ENCODE measurements at regions of chr16 and their contacts with region 1.

Region 1: GRCh38 chr16:67846320-67847063 is at the start of gene NUTF2:
- DNase-seq: peak; percentile 97 to 98 (median 98)
- ATAC-seq: peak; percentile 83 to 91 (median 88)
- H3K4me3 ChIP-seq: peak within 1 kb of the TSS; percentile 76 to 100 (median 94)
- H3K27ac ChIP-seq: peak within 1 kb of the TSS; percentile 88 to 100 (median 96)
- H3K4me1 ChIP-seq: peaks cover 24 to 65% (median 51%) of the 10 kb centered on the region in 12 donors
- H3K27me3 ChIP-seq: no peaks in the 10 kb centered on the region
- CTCF ChIP-seq: peak in 1 of 12 donors; percentile 9
- POLR2A ChIP-seq: peak in 1 of 2 donors; percentile 70
- total RNA-seq, gene NUTF2: 66.5 to 145 (median 90.9) TPM

Region 2: GRCh38 chr16:66977341-66978113 is 869.0 kb before region 1 on chr16:
- intact Hi-C with region 1: no loop called
- DNase-seq: peak; percentile 86 to 93 (median 88)
- ATAC-seq: peak; percentile 91 to 97 (median 96)
- H3K4me3 ChIP-seq: no peak overlapping the region
- H3K27ac ChIP-seq: no peak overlapping the region
- H3K4me1 ChIP-seq: peaks cover 0 to 9% (median 0%) of the 10 kb centered on the region in 12 donors
- H3K27me3 ChIP-seq: no peaks in the 10 kb centered on the region
- CTCF ChIP-seq: peak; percentile 92 to 98 (median 95)
- POLR2A ChIP-seq: no peak

Region 3: DNA sequence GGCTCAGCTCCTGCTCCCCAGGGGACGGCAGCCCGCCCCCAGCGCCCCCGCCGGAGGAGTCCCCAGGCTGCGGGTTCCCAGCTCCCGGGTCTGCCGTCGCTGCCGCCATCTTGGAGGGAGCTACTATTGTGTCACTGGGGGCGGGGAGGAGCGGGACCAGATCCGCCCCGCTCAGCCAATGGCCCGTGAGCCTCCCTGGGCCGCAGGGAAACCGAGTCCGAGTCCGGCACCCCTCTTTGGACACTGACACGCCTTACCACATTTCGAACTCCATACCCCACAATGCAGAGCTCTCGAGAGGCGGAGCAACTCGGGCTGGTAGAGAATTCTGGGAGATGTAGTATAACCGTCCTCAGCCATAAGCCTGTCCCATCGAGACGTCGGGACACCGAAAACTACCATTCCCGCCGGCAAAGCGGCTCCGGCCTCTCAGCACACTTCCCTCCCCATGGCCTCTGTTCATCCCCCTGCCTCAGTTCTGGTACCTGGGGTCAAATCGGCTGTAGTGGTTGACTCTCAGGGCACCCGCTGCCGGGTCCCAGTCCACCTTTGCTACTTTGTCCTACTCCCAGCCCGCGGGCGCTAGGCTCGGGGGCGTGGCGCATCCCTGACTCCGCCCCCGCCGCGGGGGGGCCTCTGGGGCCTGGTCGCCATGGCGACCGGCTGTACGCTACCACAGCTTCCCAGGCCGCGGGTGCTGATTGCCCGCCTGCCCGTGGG is 39.9 kb before region 1 on chr16 and contains the starts of genes RANBP10 and TSNAXIP1:
- intact Hi-C with region 1: loop called in 1 of 10 experiments (anchors 5 kb)
- DNase-seq: peak; percentile 97 to 98 (median 98)
- ATAC-seq: peak; percentile 98 to 99 (median 98)
- H3K4me3 ChIP-seq: peak within 1 kb of the TSS; percentile 62 to 98 (median 80)
- H3K27ac ChIP-seq: peak within 1 kb of the TSS in 11 of 12 donors; percentile 68 to 93 (median 84)
- H3K4me1 ChIP-seq: peaks cover 0 to 39% (median 17%) of the 10 kb centered on the region in 12 donors
- H3K27me3 ChIP-seq: no peaks in the 10 kb centered on the region
- CTCF ChIP-seq: no peak
- POLR2A ChIP-seq: peak in 1 of 2 donors; percentile 91
- total RNA-seq, gene RANBP10: 7.1 to 19.7 (median 12.3) TPM
- total RNA-seq, gene TSNAXIP1: 0.16 to 0.93 (median 0.46) TPM in 8 of 9 donors, not detected in the other

Region 4: DNA sequence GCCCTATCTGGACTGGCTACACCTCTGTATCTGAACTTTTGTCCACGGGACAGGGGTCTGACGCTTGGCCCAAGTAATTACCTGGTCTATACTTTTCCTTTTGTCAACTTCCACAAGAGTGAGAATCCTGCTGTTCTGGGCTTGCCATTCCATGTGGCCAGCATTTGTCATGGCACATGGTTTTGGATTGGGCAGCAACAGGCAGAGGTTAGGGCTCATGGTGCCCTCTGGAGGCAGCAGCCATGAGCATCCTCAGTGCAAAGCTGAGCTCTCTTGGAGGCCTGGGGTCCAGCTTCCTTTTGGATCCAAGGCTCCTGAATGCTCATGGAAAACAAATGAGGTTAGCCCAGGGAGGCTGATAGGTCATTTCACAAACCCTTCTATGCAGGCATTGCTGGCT is 18.8 kb after region 1 on chr16:
- intact Hi-C with region 1: loop called in 1 of 10 experiments (anchors 2 kb)
- DNase-seq: no peak
- ATAC-seq: no peak
- H3K4me3 ChIP-seq: no peak overlapping the region
- H3K27ac ChIP-seq: peak overlapping the region in 2 of 12 donors; percentile 87 to 93
- H3K4me1 ChIP-seq: peaks cover 6 to 52% (median 43%) of the 10 kb centered on the region in 12 donors
- H3K27me3 ChIP-seq: no peaks in the 10 kb centered on the region
- CTCF ChIP-seq: peak in 10 of 12 donors; percentile 19 to 51 (median 30)
- POLR2A ChIP-seq: no peak

Measured in heart left ventricle (tissue), 16 donors.